IMR-90 (cell line): ENCODE measurements at regions of chr3 and their contacts with region 1.

Region 1: GRCh38 chr3:32667122-32667521 is 17.9 kb upstream of the CNOT10 start:
- DNase-seq: no peak
- ATAC-seq: no peak
- H3K4me3 ChIP-seq: no peak overlapping the region
- H3K27ac ChIP-seq: no peak overlapping the region
- H3K4me1 ChIP-seq: no peaks in the 10 kb centered on the region
- H3K27me3 ChIP-seq: no peaks in the 10 kb centered on the region; the same call in 1 of the 2 replicates
- CTCF ChIP-seq: no peak
- POLR2A ChIP-seq: no peak
- RAD21 ChIP-seq: no peak

Region 2: DNA sequence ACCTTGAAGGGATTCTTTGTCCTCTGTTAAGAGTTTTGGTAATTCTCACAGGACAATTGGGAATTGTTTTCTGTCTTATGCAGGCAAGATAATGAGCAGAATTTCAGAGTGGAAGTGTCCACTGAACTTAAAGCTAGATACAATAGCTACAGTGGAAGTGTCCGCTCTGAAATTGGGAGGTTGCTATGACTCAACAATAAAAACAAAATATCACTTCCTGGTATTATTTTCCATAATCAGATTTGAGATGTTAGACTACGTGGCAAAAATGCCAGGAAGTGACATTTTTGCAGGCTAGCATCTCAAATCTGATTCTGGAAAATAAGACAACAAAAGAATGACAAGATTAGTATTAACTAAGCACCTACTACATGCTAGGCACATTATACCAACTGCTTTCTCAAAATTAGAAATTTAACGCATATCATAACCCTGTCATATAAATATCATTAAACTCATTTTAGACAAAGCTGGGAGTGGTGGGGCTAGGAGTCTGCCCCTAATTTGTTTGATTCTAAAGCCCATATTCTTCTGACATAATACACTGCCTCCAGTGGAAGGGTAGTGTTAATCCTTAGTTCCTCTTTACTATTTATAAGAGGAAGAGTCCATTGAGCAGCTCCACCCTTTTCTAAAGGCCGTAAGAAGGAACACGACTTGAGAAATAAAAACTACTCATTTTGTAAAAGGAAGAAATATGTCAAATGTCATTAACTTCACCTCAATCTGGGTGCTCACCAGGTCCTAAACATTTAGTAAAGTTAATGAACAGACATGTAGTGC is 1401.3 kb before region 1 on chr3:
- CTCF ChIA-PET with region 1: no interaction called
- POLR2A ChIA-PET with region 1: no interaction called
- dilution Hi-C with region 1: no loop called
- in situ Hi-C with region 1: no loop called
- intact Hi-C with region 1: no loop called
- DNase-seq: no peak
- ATAC-seq: no peak
- H3K4me3 ChIP-seq: no peak overlapping the region
- H3K27ac ChIP-seq: no peak overlapping the region
- H3K4me1 ChIP-seq: no peaks in the 10 kb centered on the region
- H3K27me3 ChIP-seq: no peaks in the 10 kb centered on the region; the same call in 1 of the 2 replicates
- CTCF ChIP-seq: no peak
- POLR2A ChIP-seq: no peak
- RAD21 ChIP-seq: no peak

Region 3: GRCh38 chr3:32177702-32178198 is 489.4 kb before region 1 on chr3:
- CTCF ChIA-PET with region 1: no interaction called
- POLR2A ChIA-PET with region 1: no interaction called
- dilution Hi-C with region 1: no loop called
- in situ Hi-C with region 1: no loop called
- intact Hi-C with region 1: loop called (anchors 5 kb)
- DNase-seq: peak; percentile 47
- ATAC-seq: peak; percentile 81
- H3K4me3 ChIP-seq: no peak overlapping the region
- H3K27ac ChIP-seq: no peak overlapping the region
- H3K4me1 ChIP-seq: no peaks in the 10 kb centered on the region
- H3K27me3 ChIP-seq: peaks cover 18% of the 10 kb centered on the region
- CTCF ChIP-seq: peak; percentile 47
- POLR2A ChIP-seq: no peak
- RAD21 ChIP-seq: peak; percentile 33; the same call in 1 of the 2 replicates

Region 4: DNA sequence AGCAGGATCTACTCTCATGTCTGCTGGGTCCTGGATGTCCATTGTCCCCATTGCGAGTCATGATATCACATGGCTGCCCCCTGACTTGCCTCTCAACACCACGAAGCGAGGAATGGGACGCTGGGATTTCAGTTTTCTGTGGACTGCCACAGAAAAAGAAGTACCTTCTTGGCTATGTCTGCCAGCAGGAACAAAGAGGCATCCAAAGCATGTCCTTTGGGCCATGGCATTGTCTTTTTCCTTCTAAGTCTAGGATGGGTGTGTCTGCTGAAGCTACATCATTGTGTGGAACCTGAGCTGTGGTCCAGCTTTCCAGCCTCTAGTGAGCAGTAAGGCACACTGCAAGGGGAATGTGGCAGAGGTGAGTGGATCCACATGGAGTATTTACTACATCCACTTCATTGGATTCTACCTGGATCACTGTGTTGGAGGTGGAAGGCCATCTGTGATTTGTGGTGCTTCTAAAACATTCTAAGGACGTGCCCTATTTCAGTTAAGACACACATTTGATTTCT is 405.0 kb before region 1 on chr3:
- CTCF ChIA-PET with region 1: interaction called, 14 read pairs
- POLR2A ChIA-PET with region 1: no interaction called
- dilution Hi-C with region 1: no loop called
- in situ Hi-C with region 1: no loop called
- intact Hi-C with region 1: no loop called
- DNase-seq: no peak
- ATAC-seq: no peak
- H3K4me3 ChIP-seq: no peak overlapping the region
- H3K27ac ChIP-seq: no peak overlapping the region
- H3K4me1 ChIP-seq: no peaks in the 10 kb centered on the region
- H3K27me3 ChIP-seq: no peaks in the 10 kb centered on the region; the same call in 1 of the 2 replicates
- CTCF ChIP-seq: no peak
- POLR2A ChIP-seq: no peak
- RAD21 ChIP-seq: no peak

Region 5: DNA sequence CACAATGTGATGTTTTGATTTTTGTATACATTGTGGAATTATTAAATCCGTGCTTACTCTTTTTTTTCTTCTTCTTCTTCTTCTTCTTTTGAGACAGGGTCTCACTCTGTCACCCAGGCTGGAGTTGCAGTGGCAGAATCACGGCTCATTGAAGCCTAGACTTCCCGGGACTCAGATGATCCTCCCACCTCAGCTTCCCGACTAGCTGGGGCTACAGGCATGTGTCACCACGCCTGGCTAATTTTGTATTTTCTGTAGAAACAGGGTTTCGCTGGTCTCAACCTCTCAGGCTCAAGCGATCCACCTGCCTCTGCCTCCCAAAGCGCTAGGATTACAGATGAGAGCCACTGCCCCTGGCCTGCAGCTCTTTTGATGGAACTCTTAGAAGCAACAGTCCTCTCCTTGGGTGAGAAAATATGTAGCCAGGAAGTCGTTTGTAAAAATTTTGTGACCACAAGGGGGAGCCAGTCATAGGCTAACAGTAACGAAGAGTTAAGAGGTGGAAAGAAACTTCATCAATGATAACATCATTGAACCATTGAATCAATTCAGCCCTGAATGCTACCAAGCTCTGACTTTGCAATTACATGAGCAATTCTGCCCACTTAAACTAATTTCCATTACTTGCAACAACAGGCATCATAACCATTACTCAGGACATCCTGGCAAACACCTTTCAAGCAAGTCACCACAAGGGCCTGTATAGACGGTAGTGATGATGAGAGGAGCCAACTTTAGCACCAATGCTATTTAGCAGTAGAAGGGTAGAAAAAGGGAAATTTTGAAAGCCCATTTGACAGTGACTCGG is 292.1 kb before region 1 on chr3:
- CTCF ChIA-PET with region 1: no interaction called
- POLR2A ChIA-PET with region 1: no interaction called
- dilution Hi-C with region 1: no loop called
- in situ Hi-C with region 1: loop called (anchors 25 kb)
- intact Hi-C with region 1: loop called (anchors 5 kb)
- DNase-seq: peak; percentile 74
- ATAC-seq: peak; percentile 73
- H3K4me3 ChIP-seq: no peak overlapping the region
- H3K27ac ChIP-seq: no peak overlapping the region
- H3K4me1 ChIP-seq: no peaks in the 10 kb centered on the region; the same call in 1 of the 2 replicates
- H3K27me3 ChIP-seq: peaks cover 9% of the 10 kb centered on the region
- CTCF ChIP-seq: peak; percentile 66
- POLR2A ChIP-seq: no peak
- RAD21 ChIP-seq: peak; percentile 57

Region 6: DNA sequence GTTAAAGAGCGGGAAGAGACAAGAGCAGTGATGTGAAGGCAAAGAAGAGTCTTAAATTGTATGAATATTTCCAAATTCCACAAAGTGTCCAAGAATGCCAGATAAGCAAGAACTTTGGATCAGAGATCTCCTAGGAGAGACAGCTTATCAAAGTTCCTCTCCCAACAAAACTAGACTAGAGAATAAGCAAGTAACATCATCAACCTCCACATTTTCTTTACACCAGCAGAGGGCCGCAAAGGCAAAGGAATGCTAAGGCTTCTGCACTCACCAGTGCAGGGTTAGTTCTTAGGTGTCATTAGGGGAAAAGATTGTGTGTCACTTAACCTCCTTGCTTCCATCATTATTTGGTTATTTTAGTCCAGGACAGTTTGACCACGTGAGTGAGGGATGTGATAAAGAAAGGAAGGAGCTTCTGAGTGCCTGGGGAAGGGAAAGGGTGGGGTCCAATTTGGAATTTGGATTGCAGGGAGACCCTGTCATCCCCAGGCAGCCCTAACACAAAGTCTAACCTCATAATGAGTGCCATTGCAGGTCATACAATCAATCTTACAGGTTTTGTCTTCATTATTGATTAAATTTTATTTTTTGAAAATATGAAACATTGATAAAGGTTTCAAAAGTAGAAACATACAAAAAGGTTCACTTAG is 156.9 kb before region 1 on chr3:
- CTCF ChIA-PET with region 1: no interaction called
- POLR2A ChIA-PET with region 1: no interaction called
- dilution Hi-C with region 1: no loop called
- in situ Hi-C with region 1: loop called (anchors 5 kb)
- intact Hi-C with region 1: loop called (anchors 1 kb)
- DNase-seq: peak; percentile 71
- ATAC-seq: peak; percentile 97
- H3K4me3 ChIP-seq: no peak overlapping the region
- H3K27ac ChIP-seq: no peak overlapping the region
- H3K4me1 ChIP-seq: no peaks in the 10 kb centered on the region
- H3K27me3 ChIP-seq: no peaks in the 10 kb centered on the region
- CTCF ChIP-seq: peak; percentile 89
- POLR2A ChIP-seq: peak; percentile 55; the same call in 1 of the 2 replicates
- RAD21 ChIP-seq: peak; percentile 98

Region 7: GRCh38 chr3:32570421-32571191 is 96.5 kb before region 1 on chr3 and contains the start of gene DYNC1LI1:
- CTCF ChIA-PET with region 1: no interaction called
- POLR2A ChIA-PET with region 1: no interaction called
- dilution Hi-C with region 1: no loop called
- in situ Hi-C with region 1: no loop called
- intact Hi-C with region 1: loop called (anchors 2 kb)
- DNase-seq: peak; percentile 87
- ATAC-seq: peak; percentile 96
- H3K4me3 ChIP-seq: peak within 1 kb of the TSS; percentile 90
- H3K27ac ChIP-seq: peak within 1 kb of the TSS; percentile 98
- H3K4me1 ChIP-seq: peaks cover 1% of the 10 kb centered on the region
- H3K27me3 ChIP-seq: no peaks in the 10 kb centered on the region
- CTCF ChIP-seq: no peak
- POLR2A ChIP-seq: peak; percentile 93
- RAD21 ChIP-seq: no peak
- total RNA-seq, gene DYNC1LI1: 30.8 and 45.0 TPM in 2 replicates

Region 8: GRCh38 chr3:32709346-32709745 is 42.2 kb after region 1 on chr3:
- CTCF ChIA-PET with region 1: no interaction called
- POLR2A ChIA-PET with region 1: no interaction called
- dilution Hi-C with region 1: no loop called
- in situ Hi-C with region 1: no loop called
- intact Hi-C with region 1: no loop called
- DNase-seq: no peak
- ATAC-seq: no peak
- H3K4me3 ChIP-seq: no peak overlapping the region
- H3K27ac ChIP-seq: no peak overlapping the region
- H3K4me1 ChIP-seq: peaks cover 2% of the 10 kb centered on the region; the same call in 1 of the 2 replicates
- H3K27me3 ChIP-seq: no peaks in the 10 kb centered on the region
- CTCF ChIP-seq: no peak
- POLR2A ChIP-seq: no peak
- RAD21 ChIP-seq: no peak

Region 9: GRCh38 chr3:32913790-32914446 is 246.8 kb after region 1 on chr3:
- CTCF ChIA-PET with region 1: no interaction called
- POLR2A ChIA-PET with region 1: no interaction called
- dilution Hi-C with region 1: no loop called
- in situ Hi-C with region 1: no loop called
- intact Hi-C with region 1: no loop called
- DNase-seq: no peak
- ATAC-seq: no peak
- H3K4me3 ChIP-seq: no peak overlapping the region
- H3K27ac ChIP-seq: no peak overlapping the region
- H3K4me1 ChIP-seq: no peaks in the 10 kb centered on the region
- H3K27me3 ChIP-seq: peaks cover 1% of the 10 kb centered on the region
- CTCF ChIP-seq: no peak
- POLR2A ChIP-seq: no peak
- RAD21 ChIP-seq: no peak